ENCODE measurements at regions of chr1 and their contacts with region 1.

Region 1: DNA sequence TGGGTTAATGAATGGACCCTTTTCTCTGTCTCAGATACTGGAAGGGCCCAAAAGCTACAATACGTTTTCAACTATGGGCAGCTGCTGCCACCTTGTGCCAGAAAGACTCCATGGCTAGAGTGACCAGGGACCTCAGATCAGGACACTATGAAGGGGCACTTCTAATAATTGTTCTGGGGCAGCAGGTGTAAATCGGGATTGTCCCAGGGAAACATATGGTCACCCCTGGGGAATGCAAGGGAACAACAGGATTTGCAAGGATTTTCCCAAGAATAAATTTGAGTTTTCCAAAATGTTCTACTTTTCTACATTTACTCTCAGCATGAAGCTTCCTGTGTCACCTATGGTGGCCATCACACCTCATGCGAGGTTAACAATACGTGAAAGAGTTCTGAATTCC is 12.0 kb upstream of the FCAMR start:
- DNase-seq: peak; percentile 58
- H3K4me3 ChIP-seq: no peak overlapping the region
- H3K27ac ChIP-seq: no peak overlapping the region
- H3K4me1 ChIP-seq: no peaks in the 10 kb centered on the region
- H3K27me3 ChIP-seq: peaks cover 46% of the 10 kb centered on the region; the same call in 1 of the 2 replicates
- CTCF ChIP-seq: peak; percentile 62
- EP300 ChIP-seq: no peak
- RAD21 ChIP-seq: peak; percentile 85

Region 2: GRCh38 chr1:206635080-206635977 is 346.9 kb before region 1 on chr1 and contains the start of gene DYRK3:
- CTCF ChIA-PET with region 1: interaction called, 19 read pairs
- POLR2A ChIA-PET with region 1: interaction called, 5 read pairs
- DNase-seq: peak; percentile 97
- H3K4me3 ChIP-seq: peak within 1 kb of the TSS; percentile 87 to 92
- H3K27ac ChIP-seq: peak within 1 kb of the TSS; percentile 79 to 83
- H3K4me1 ChIP-seq: peaks cover 18 to 22% of the 10 kb centered on the region in 2 experiments; a peak in 3 of 4 replicates
- H3K27me3 ChIP-seq: no peaks in the 10 kb centered on the region
- CTCF ChIP-seq: no peak
- EP300 ChIP-seq: no peak; a peak in 1 of 4 replicates
- RAD21 ChIP-seq: no peak
- polyA plus RNA-seq, gene DYRK3: 3.6 and 5.8 TPM in 2 replicates

Region 3: DNA sequence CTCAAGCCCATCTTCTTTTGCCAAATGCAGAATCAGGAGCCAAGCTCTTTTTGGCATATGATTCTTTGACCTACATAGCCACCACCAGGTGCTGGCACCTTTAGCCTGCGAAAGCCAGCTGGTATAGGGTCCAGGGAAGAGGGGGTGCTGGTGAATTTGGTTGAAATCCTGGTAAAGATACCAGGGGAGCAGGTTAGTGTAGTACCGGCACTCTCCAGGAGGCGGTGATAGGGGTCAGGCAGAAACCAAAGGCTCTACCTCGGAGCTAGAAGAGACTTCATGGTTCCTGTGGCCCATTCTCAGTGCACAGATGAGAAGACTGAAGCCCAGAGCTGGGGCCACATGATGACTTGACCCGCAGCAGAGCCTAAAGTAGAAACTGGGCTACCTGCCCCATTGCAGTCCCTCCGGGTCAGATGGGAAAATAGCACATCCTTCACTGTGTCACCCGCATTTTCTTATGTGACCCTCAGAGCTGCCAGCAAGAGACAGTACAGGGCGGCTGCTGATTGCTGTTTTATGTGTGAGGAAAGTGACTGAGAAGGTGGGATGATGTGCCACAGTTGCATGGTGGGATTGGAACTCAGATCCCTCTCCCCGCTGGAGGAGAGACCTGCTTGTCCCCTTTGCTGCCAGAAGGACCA is 247.6 kb before region 1 on chr1:
- CTCF ChIA-PET with region 1: interaction called, 32 read pairs
- POLR2A ChIA-PET with region 1: no interaction called
- DNase-seq: peak; percentile 83
- H3K4me3 ChIP-seq: no peak overlapping the region; a peak in 1 of 4 replicates
- H3K27ac ChIP-seq: no peak overlapping the region
- H3K4me1 ChIP-seq: peaks cover 0 to 2% of the 10 kb centered on the region in 2 experiments; a peak in 1 of 4 replicates
- H3K27me3 ChIP-seq: no peaks in the 10 kb centered on the region
- CTCF ChIP-seq: peak; percentile 72
- EP300 ChIP-seq: no peak
- RAD21 ChIP-seq: peak; percentile 85

Region 4: GRCh38 chr1:206971029-206971655 is 11.1 kb before region 1 on chr1:
- CTCF ChIA-PET with region 1: interaction called, 48 read pairs
- POLR2A ChIA-PET with region 1: no interaction called
- DNase-seq: no peak
- H3K4me3 ChIP-seq: no peak overlapping the region
- H3K27ac ChIP-seq: no peak overlapping the region
- H3K4me1 ChIP-seq: no peaks in the 10 kb centered on the region
- H3K27me3 ChIP-seq: peaks cover 58% of the 10 kb centered on the region; the same call in 1 of the 2 replicates
- CTCF ChIP-seq: no peak
- EP300 ChIP-seq: no peak
- RAD21 ChIP-seq: no peak

Region 5: GRCh38 chr1:207013321-207014085 is 31.3 kb after region 1 on chr1:
- CTCF ChIA-PET with region 1: interaction called, 11 read pairs
- POLR2A ChIA-PET with region 1: no interaction called
- DNase-seq: no peak
- H3K4me3 ChIP-seq: no peak overlapping the region
- H3K27ac ChIP-seq: no peak overlapping the region
- H3K4me1 ChIP-seq: no peaks in the 10 kb centered on the region; a peak in 1 of 4 replicates
- H3K27me3 ChIP-seq: no peaks in the 10 kb centered on the region
- CTCF ChIP-seq: no peak
- EP300 ChIP-seq: no peak
- RAD21 ChIP-seq: no peak